IMR-90 (cell line): ENCODE measurements at regions of chr18 and their contacts with region 1.

Region 1: GRCh38 chr18:801137-801536 is 10.9 kb downstream of the YES1 start:
- DNase-seq: no peak
- ATAC-seq: no peak
- H3K4me3 ChIP-seq: no peak overlapping the region
- H3K27ac ChIP-seq: no peak overlapping the region
- H3K4me1 ChIP-seq: peaks cover 2% of the 10 kb centered on the region; the same call in 1 of the 2 replicates
- H3K27me3 ChIP-seq: no peaks in the 10 kb centered on the region
- CTCF ChIP-seq: no peak
- POLR2A ChIP-seq: no peak
- RAD21 ChIP-seq: no peak

Region 2: GRCh38 chr18:754666-755065 is 46.5 kb before region 1 on chr18:
- CTCF ChIA-PET with region 1: no interaction called
- POLR2A ChIA-PET with region 1: no interaction called
- dilution Hi-C with region 1: no loop called
- in situ Hi-C with region 1: no loop called
- intact Hi-C with region 1: loop called (anchors 1 kb)
- DNase-seq: no peak
- ATAC-seq: no peak
- H3K4me3 ChIP-seq: no peak overlapping the region
- H3K27ac ChIP-seq: no peak overlapping the region
- H3K4me1 ChIP-seq: no peaks in the 10 kb centered on the region
- H3K27me3 ChIP-seq: no peaks in the 10 kb centered on the region
- CTCF ChIP-seq: no peak
- POLR2A ChIP-seq: no peak
- RAD21 ChIP-seq: no peak

Region 3: GRCh38 chr18:765764-766549 is 35.2 kb before region 1 on chr18:
- CTCF ChIA-PET with region 1: no interaction called
- POLR2A ChIA-PET with region 1: no interaction called
- dilution Hi-C with region 1: no loop called
- in situ Hi-C with region 1: no loop called
- intact Hi-C with region 1: loop called (anchors 5 kb)
- DNase-seq: no peak
- ATAC-seq: no peak
- H3K4me3 ChIP-seq: no peak overlapping the region
- H3K27ac ChIP-seq: no peak overlapping the region
- H3K4me1 ChIP-seq: no peaks in the 10 kb centered on the region
- H3K27me3 ChIP-seq: no peaks in the 10 kb centered on the region
- CTCF ChIP-seq: no peak
- POLR2A ChIP-seq: no peak
- RAD21 ChIP-seq: no peak

Region 4: GRCh38 chr18:824179-824578 is 23.0 kb after region 1 on chr18:
- CTCF ChIA-PET with region 1: no interaction called
- POLR2A ChIA-PET with region 1: no interaction called
- dilution Hi-C with region 1: no loop called
- in situ Hi-C with region 1: no loop called
- intact Hi-C with region 1: no loop called
- DNase-seq: no peak
- ATAC-seq: no peak
- H3K4me3 ChIP-seq: no peak overlapping the region
- H3K27ac ChIP-seq: no peak overlapping the region
- H3K4me1 ChIP-seq: no peaks in the 10 kb centered on the region
- H3K27me3 ChIP-seq: no peaks in the 10 kb centered on the region
- CTCF ChIP-seq: no peak
- POLR2A ChIP-seq: no peak
- RAD21 ChIP-seq: no peak